A549 (cell line): ENCODE measurements at regions of chr20 and their contacts with region 1.

Region 1: DNA sequence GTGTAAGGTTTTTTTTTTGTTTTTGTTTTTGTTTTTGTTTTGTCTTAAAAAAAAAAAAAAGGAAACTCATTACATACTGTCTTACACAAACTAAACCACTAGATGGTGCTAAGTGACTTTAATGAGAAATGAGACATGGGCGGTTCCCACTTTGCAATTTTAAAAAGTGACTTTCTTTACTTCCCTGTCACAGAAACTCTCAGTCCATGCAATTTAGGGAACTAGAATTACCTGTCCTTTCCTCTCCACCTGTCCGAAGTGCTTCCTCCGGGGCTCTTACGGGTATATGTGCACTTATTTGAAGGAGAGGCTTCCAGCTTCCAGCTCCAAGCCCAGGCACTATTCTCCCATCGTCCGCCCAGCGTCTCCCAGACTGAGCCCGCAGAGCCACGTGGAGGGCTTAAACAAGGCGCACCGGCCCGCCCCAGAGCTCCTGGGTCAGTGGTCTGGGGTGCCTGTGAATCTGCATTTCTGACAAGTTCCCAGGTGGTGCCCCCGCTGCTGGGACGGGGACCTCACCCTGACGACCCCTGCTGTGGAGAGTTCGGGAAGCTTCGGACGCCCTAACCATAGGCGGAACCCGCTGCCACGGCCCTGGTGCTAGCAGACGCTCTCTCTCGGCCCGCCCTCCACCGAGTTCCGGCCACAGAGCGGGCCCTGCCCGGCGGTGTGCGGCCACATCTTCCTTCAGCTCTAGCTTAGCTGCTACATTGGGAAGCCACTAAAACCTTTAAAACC is 26.1 kb downstream of the BFSP1 start:
- DNase-seq: peak; percentile 45 to 53
- ATAC-seq: peak; percentile 45 to 77
- H3K4me3 ChIP-seq: 0 out of 3 replicates have a peak overlapping the region, but pooled peaks have one; percentile 15
- H3K27ac ChIP-seq: peak overlapping the region; percentile 30 to 64; a peak in 4 of 6 replicates
- H3K4me1 ChIP-seq: 0 out of 3 replicates have a peak, but pooled peaks cover 3% of the 10 kb centered on the region
- CTCF ChIP-seq: peak; percentile 98
- EP300 ChIP-seq: no peak
- POLR2A ChIP-seq: no peak
- RAD21 ChIP-seq: peak; percentile 91 to 95

Region 2: GRCh38 chr20:16846006-16846405 is 659.1 kb before region 1 on chr20:
- CTCF ChIA-PET with region 1: no interaction called
- POLR2A ChIA-PET with region 1: no interaction called
- DNase-seq: no peak
- ATAC-seq: no peak
- H3K4me3 ChIP-seq: no peak overlapping the region
- H3K27ac ChIP-seq: no peak overlapping the region
- H3K4me1 ChIP-seq: no peaks in the 10 kb centered on the region
- CTCF ChIP-seq: no peak
- EP300 ChIP-seq: no peak
- POLR2A ChIP-seq: no peak
- RAD21 ChIP-seq: no peak

Region 3: GRCh38 chr20:17189976-17190695 is 314.9 kb before region 1 on chr20:
- CTCF ChIA-PET with region 1: no interaction called
- POLR2A ChIA-PET with region 1: no interaction called
- DNase-seq: no peak
- ATAC-seq: no peak
- H3K4me3 ChIP-seq: no peak overlapping the region
- H3K27ac ChIP-seq: no peak overlapping the region
- H3K4me1 ChIP-seq: no peaks in the 10 kb centered on the region
- CTCF ChIP-seq: no peak
- EP300 ChIP-seq: no peak
- POLR2A ChIP-seq: no peak
- RAD21 ChIP-seq: no peak

Region 4: GRCh38 chr20:17210983-17211382 is 294.1 kb before region 1 on chr20:
- CTCF ChIA-PET with region 1: no interaction called
- POLR2A ChIA-PET with region 1: no interaction called
- DNase-seq: no peak
- ATAC-seq: 0 out of 6 replicates have a peak, but pooled peaks of 1 of the 2 experiments have one; percentile 34
- H3K4me3 ChIP-seq: no peak overlapping the region
- H3K27ac ChIP-seq: no peak overlapping the region
- H3K4me1 ChIP-seq: no peaks in the 10 kb centered on the region
- CTCF ChIP-seq: no peak
- EP300 ChIP-seq: no peak
- POLR2A ChIP-seq: no peak
- RAD21 ChIP-seq: no peak

Region 5: GRCh38 chr20:17536944-17537444 is 31.9 kb after region 1 on chr20:
- CTCF ChIA-PET with region 1: interaction called, 31 read pairs
- POLR2A ChIA-PET with region 1: no interaction called
- DNase-seq: peak; percentile 90 to 97
- ATAC-seq: peak; percentile 98
- H3K4me3 ChIP-seq: no peak overlapping the region
- H3K27ac ChIP-seq: peak overlapping the region; percentile 60 to 80
- H3K4me1 ChIP-seq: peaks cover 41% of the 10 kb centered on the region
- CTCF ChIP-seq: peak; percentile 99
- EP300 ChIP-seq: no peak
- POLR2A ChIP-seq: no peak
- RAD21 ChIP-seq: peak; percentile 100

Region 6: DNA sequence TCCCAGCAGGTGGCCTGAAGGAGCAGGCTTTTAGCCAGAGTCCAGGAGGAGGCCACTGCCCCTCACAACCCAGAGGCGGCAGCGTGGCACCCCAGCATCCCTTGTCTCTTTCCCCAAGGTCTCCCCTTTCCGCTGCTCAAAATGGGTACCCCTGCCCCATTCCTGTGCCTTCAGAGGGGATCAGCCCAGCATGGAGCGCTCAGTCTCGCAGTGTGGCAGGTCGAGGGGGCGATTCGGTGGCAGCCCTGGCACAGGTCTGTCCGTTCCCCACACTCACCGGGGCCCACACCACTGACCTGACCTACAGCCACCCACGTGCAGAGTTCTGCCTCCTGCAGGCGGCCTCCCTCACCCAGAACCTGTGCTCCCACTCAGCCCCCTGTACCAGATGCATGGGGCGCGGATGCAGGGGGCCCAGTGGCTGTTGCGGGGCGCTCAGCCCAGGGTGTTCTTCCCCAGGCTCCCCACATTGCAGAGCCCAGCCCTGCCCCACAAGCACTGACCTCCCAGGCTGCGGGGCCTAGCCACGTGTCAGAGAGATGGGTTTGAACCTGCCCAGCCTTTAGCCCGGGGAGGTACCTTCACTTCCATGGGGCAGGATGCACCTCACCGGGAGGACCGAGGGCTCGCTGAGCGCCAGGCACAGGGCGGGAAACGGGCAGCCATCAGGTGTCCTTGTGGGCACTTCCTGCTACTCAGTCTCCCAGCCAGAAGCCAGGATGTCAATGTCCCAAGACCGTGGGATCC is 106.6 kb after region 1 on chr20:
- CTCF ChIA-PET with region 1: interaction called, 230 read pairs
- POLR2A ChIA-PET with region 1: no interaction called
- DNase-seq: peak in 1 of 2 experiments; percentile 31
- ATAC-seq: peak; percentile 20 to 25
- H3K4me3 ChIP-seq: no peak overlapping the region
- H3K27ac ChIP-seq: peak overlapping the region in 1 of 2 experiments; percentile 66; a peak in 3 of 6 replicates
- H3K4me1 ChIP-seq: peaks cover 14% of the 10 kb centered on the region; the same call in 2 of the 3 replicates
- CTCF ChIP-seq: peak; percentile 36
- EP300 ChIP-seq: no peak
- POLR2A ChIP-seq: no peak
- RAD21 ChIP-seq: peak; percentile 36 to 44; a peak in 3 of 5 replicates

Region 7: GRCh38 chr20:17643531-17644188 is 138.6 kb after region 1 on chr20:
- CTCF ChIA-PET with region 1: interaction called, 36 read pairs
- POLR2A ChIA-PET with region 1: no interaction called
- DNase-seq: no peak
- ATAC-seq: no peak
- H3K4me3 ChIP-seq: no peak overlapping the region
- H3K27ac ChIP-seq: no peak overlapping the region
- H3K4me1 ChIP-seq: no peaks in the 10 kb centered on the region
- CTCF ChIP-seq: no peak
- EP300 ChIP-seq: no peak
- POLR2A ChIP-seq: no peak
- RAD21 ChIP-seq: no peak

Region 8: DNA sequence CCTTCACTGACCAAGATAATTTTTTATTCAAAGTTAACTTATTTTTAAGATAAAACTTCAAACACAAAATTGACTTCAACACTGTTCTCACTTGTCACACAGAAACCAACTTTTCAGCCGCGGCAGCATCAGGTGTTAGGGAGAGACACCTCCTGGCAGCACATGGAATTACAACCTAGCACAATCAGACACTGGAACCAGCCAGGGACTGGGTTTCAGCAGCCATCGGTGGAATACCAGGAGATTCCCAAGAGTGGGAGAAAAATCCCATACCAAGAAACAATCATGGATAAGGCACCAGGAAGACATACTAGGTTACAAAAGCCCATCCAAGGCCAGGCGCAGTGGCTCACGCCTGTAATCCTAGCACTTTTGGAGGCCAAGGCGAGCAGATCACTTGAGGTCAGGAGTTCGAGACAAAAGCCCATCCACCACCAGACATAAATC is 393.5 kb after region 1 on chr20:
- CTCF ChIA-PET with region 1: interaction called, 17 read pairs
- POLR2A ChIA-PET with region 1: no interaction called
- DNase-seq: peak; percentile 73 to 88
- ATAC-seq: peak; percentile 69 to 82; a peak in 4 of 6 replicates
- H3K4me3 ChIP-seq: no peak overlapping the region
- H3K27ac ChIP-seq: no peak overlapping the region
- H3K4me1 ChIP-seq: peaks cover 8% of the 10 kb centered on the region; the same call in 2 of the 3 replicates
- CTCF ChIP-seq: peak; percentile 95
- EP300 ChIP-seq: no peak
- POLR2A ChIP-seq: no peak
- RAD21 ChIP-seq: peak; percentile 96 to 97